ENCODE measurements at regions of chr13 and their contacts with region 1.

Region 1: DNA sequence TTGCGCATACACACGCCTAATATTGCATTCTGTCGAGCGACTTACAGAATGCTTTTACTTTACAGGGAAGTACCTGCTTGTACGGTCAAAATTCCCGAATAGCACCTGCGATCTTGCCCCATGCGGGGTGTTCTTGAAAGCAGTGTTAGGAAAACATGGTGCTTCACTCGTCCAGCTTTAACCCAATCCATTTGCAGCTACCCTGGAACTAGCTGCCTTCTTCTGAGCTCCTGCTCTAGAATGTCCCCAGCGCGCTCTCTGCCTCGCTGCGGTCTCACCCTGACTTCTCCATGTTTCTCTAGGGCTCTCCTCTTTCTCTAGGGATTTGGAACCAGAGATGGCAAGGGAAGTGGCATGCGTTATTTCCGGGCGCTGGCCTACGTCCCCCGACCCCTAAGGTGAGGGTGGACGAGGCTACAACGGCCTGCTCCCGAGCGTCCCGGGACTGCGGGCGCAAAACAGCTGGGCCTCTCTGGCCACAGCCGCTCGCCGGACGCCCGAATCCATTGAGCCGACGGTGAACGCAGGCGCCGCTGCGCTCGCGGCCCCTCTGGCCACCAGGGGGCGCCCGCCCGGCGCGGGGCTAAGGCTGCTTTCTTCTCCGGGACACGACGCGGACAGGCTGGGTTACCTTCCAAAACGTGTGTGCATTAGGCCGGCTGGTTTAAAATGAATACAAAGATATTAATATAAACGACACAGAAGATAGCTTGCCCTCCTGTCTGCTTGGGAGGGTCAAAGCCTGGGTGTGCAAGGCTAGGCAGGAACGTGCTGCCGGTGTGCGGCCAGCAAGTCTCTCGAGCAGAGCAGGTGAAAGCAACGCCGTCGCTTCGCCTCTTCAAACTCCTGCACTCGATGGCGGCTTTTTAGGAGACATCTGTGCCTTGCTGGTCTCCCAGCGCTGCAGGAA is 1.8 kb upstream of the SPRY2 start:
- DNase-seq: peak; percentile 89 to 92
- ATAC-seq: peak; percentile 54 to 68 (median 60)
- H3K4me3 ChIP-seq: peak overlapping the region; percentile 98
- H3K27ac ChIP-seq: peak overlapping the region; percentile 99
- H3K4me1 ChIP-seq: peaks cover 13% of the 10 kb centered on the region
- H3K27me3 ChIP-seq: no peaks in the 10 kb centered on the region
- CTCF ChIP-seq: peak; percentile 100

Region 2: DNA sequence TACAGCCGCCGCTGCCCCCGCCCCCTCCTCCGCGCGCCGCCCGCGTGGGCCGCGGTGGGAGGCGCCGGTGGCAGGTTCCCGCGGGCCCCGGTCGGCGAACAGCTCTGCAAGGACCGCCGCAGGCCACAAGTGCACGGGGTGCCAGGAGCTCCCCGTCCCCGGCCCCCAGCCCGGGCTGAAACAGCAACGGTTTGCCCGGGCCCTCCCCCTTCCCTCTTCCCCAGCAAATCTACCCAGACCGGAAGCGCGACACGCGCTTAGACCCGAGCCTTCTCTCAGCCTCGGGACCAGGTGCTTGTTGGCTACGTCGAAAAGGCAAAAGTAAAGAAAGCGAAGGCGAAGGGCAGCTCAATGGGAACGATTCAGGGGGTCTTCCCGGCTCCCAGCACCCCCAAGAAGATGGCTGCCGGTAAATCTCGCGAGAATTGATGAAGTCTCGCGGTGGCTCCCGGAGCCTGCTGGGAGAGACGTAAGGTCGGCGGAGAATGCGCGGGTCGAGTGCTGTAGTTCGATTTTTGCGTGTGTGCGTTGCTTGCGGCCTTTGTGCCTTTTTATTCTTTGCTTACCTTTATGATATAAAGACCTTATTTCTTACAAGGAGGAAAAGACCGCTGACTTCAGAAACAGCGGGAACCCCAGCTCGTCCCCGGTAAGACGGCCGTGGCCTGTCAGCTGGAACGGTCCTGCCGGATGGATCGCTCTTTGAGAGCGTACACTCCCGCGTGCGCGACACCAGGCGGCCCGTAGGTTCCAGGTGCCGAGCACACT is 936.7 kb before region 1 on chr13 and contains the start of gene RBM26:
- intact Hi-C with region 1: loop called in 1 of 2 experiments (anchors 5 kb)
- DNase-seq: peak; percentile 91 to 97
- ATAC-seq: peak; percentile 92 to 95 (median 92)
- H3K4me3 ChIP-seq: peak within 1 kb of the TSS; percentile 72
- H3K27ac ChIP-seq: peak within 1 kb of the TSS; percentile 95
- H3K4me1 ChIP-seq: peaks cover 46% of the 10 kb centered on the region
- H3K27me3 ChIP-seq: no peaks in the 10 kb centered on the region
- CTCF ChIP-seq: peak; percentile 18
- total RNA-seq, gene RBM26: 21.4 to 36.5 (median 25.6) TPM

Region 3: GRCh38 chr13:79679334-79679733 is 663.4 kb before region 1 on chr13:
- intact Hi-C with region 1: loop called in 1 of 2 experiments (anchors 5 kb)
- DNase-seq: peak; percentile 57 to 69
- ATAC-seq: peak; percentile 66 to 91 (median 79)
- H3K4me3 ChIP-seq: no peak overlapping the region
- H3K27ac ChIP-seq: no peak overlapping the region
- H3K4me1 ChIP-seq: no peaks in the 10 kb centered on the region
- H3K27me3 ChIP-seq: no peaks in the 10 kb centered on the region
- CTCF ChIP-seq: peak; percentile 86

Region 4: GRCh38 chr13:80048802-80049201 is 293.9 kb before region 1 on chr13:
- intact Hi-C with region 1: loop called in 1 of 2 experiments (anchors 2 kb)
- DNase-seq: peak; percentile 81 to 88
- ATAC-seq: peak; percentile 98 to 100 (median 99)
- H3K4me3 ChIP-seq: no peak overlapping the region
- H3K27ac ChIP-seq: peak overlapping the region; percentile 68
- H3K4me1 ChIP-seq: peaks cover 25% of the 10 kb centered on the region
- H3K27me3 ChIP-seq: no peaks in the 10 kb centered on the region
- CTCF ChIP-seq: no peak

Region 5: GRCh38 chr13:80363890-80364503 is 21.3 kb after region 1 on chr13:
- intact Hi-C with region 1: loop called (anchors 2 kb)
- DNase-seq: no peak
- ATAC-seq: peak in 1 of 4 donors; percentile 74
- H3K4me3 ChIP-seq: peak overlapping the region; percentile 46
- H3K27ac ChIP-seq: no peak overlapping the region
- H3K4me1 ChIP-seq: peaks cover 4% of the 10 kb centered on the region
- H3K27me3 ChIP-seq: no peaks in the 10 kb centered on the region
- CTCF ChIP-seq: peak; percentile 85

Measured in psoas muscle (tissue), 8 donors.